Sciatic nerve (tissue), 2 donors: ENCODE measurements at regions of chr11 and their contacts with region 1.

Region 1: DNA sequence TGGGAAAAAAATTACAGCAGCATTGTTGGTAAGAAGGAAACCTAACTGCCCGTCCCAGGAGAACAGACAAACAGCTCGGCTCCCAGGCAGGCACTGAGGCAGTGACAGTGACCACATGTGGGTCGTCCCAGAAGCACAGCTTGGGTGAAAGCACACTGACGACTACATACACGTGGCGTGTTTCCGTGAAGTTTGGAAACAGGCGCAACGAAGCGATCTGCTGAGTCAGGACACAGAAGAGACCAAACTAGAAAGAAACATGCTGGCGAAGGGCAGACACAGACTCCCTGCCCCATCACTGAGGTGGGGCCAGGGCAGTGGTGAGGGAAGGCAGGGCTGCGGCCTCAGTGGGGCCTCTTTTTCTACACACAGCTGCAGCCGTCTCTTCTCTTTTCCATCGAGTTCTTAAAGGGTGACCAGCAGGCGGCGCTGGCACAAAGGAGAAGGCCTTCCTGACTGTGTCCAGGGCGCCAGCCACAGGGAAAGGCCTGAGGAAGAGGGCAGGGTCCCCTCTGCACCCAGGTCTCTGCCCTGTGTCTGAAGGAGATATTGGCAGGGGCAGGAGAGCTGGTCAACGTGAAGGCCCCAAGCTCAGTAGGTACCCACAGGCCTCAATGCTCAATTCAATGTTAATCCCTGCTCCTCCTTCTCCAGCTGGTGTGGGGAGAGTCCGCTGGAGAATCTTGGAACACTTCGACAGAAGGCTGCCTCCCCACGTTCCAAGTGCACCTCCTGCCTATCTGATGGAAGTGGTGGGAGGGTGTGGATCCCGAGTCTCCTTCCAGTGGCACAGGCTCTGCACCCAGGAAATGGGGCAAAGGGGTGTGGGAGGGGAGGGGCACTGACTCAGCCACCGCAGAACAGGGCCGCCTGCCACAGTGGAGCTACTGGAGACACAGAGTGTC is 19.9 kb downstream of the CARS1 start:
- DNase-seq: peak; percentile 92
- ATAC-seq: peak; percentile 89

Region 2: DNA sequence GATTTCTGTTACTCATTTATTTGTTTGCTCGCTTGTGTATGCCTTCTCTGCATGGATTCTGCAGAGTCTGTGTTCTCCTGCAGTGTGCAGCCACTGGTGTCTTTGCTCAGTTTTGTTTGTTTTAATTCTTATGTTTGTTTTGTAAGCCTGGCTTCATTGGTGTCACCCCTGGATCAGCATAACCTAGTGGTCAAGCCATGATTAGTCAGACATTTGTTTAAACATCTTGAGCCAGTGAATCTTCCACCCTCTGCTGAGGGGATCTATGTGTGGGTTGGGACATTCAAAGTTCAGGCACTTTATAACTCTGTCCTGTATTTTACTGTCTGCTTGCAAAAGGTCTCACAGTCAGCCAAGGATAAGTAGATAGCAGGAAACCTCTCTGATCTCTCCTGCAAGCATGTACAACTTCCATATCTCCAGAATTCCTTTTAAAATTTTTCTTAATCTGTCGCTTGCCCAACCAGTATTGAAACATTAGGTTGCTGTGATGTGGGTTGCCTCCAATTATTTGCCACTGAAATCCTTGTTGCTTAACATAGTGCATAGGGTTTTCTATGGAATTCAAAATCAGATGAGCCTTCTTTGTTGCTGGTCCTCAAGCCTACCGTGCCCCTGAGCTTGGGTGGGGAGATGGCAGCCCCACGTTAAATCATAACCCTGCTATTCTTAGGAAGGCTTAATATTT is 424.3 kb before region 1 on chr11:
- intact Hi-C with region 1: no loop called
- DNase-seq: no peak
- ATAC-seq: no peak

Region 3: GRCh38 chr11:2725368-2726300 is 311.7 kb before region 1 on chr11:
- intact Hi-C with region 1: no loop called
- DNase-seq: peak; percentile 91
- ATAC-seq: peak; percentile 90

Region 4: DNA sequence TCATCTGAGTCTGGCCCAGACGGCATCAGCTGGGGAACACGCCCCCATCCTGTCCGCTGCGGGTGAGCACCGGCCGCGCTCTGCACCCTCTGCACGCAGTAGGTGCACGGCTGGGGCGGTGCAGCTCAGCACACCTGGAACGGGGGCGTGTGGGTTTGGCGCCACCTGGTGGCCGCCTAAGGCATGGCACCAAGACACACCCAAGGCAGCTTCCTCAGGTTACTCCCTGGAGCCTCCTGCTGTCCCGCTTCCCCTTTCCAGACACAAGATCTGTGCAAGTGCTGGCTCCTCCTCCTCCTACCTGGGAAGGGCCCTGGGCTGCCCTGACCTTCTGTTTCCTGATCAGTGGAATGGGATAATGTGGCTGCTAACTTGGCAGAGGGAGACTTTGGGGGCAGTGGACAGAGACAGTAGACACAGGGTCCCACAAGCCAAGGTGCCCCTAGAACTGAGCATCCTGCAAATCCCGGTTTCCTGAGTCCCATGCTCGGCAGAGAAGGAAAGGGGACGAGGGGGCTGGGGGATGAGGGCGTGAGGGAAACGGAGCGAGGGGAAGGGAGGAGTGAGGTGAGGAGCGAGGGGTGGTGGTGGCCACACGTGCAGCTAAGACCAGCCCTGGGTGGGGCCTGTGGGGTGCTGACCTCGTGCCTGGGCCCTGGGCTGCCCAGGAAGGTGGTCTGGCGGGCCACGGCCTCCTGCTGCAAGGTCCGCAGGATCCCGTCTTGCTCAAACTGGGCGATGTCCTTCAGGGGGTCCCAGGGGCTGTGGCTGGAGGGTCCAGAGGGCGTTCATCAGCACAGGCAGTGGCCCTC is 54.7 kb after region 1 on chr11:
- intact Hi-C with region 1: loop called (anchors 5 kb)
- DNase-seq: peak; percentile 74
- ATAC-seq: peak; percentile 53